IMR-90 (cell line): ENCODE measurements at regions of chr4 and their contacts with region 1.

Region 1: GRCh38 chr4:118224239-118224829 is 128.5 kb downstream of the PRSS12 start:
- DNase-seq: peak; percentile 80
- ATAC-seq: peak; percentile 70
- H3K4me3 ChIP-seq: no peak overlapping the region
- H3K27ac ChIP-seq: no peak overlapping the region
- H3K4me1 ChIP-seq: no peaks in the 10 kb centered on the region
- H3K27me3 ChIP-seq: no peaks in the 10 kb centered on the region
- CTCF ChIP-seq: peak; percentile 83
- POLR2A ChIP-seq: 0 out of 2 replicates have a peak, but pooled peaks have one; percentile 28
- RAD21 ChIP-seq: peak; percentile 96

Region 2: GRCh38 chr4:117560329-117560728 is 664.0 kb before region 1 on chr4:
- CTCF ChIA-PET with region 1: no interaction called
- POLR2A ChIA-PET with region 1: no interaction called
- dilution Hi-C with region 1: no loop called
- in situ Hi-C with region 1: loop called (anchors 25 kb)
- intact Hi-C with region 1: loop called (anchors 5 kb)
- DNase-seq: peak; percentile 40
- ATAC-seq: peak; percentile 35; the same call in 1 of the 2 replicates
- H3K4me3 ChIP-seq: no peak overlapping the region
- H3K27ac ChIP-seq: no peak overlapping the region
- H3K4me1 ChIP-seq: no peaks in the 10 kb centered on the region
- H3K27me3 ChIP-seq: no peaks in the 10 kb centered on the region
- CTCF ChIP-seq: peak; percentile 37
- POLR2A ChIP-seq: no peak
- RAD21 ChIP-seq: peak; percentile 41

Region 3: GRCh38 chr4:118034053-118034785 is 190.1 kb before region 1 on chr4 and contains the start of gene NDST3:
- CTCF ChIA-PET with region 1: interaction called, 4 read pairs
- POLR2A ChIA-PET with region 1: no interaction called
- dilution Hi-C with region 1: no loop called
- in situ Hi-C with region 1: no loop called
- intact Hi-C with region 1: loop called (anchors 1 kb)
- DNase-seq: peak; percentile 31
- ATAC-seq: peak; percentile 28
- H3K4me3 ChIP-seq: peak within 1 kb of the TSS; percentile 44
- H3K27ac ChIP-seq: no peak within 1 kb of the TSS
- H3K4me1 ChIP-seq: no peaks in the 10 kb centered on the region
- H3K27me3 ChIP-seq: 0 out of 2 replicates have a peak, but pooled peaks cover 2% of the 10 kb centered on the region
- CTCF ChIP-seq: peak; percentile 29; the same call in 1 of the 2 replicates
- POLR2A ChIP-seq: no peak
- RAD21 ChIP-seq: peak; percentile 50
- total RNA-seq, gene NDST3: under 0.01 and 0.18 TPM in 2 replicates

Region 4: GRCh38 chr4:118076958-118077766 is 147.2 kb before region 1 on chr4:
- CTCF ChIA-PET with region 1: interaction called, 5 read pairs
- POLR2A ChIA-PET with region 1: no interaction called
- dilution Hi-C with region 1: no loop called
- in situ Hi-C with region 1: loop called (anchors 5 kb)
- intact Hi-C with region 1: loop called (anchors 2 kb)
- DNase-seq: peak; percentile 34
- ATAC-seq: peak; percentile 56
- H3K4me3 ChIP-seq: no peak overlapping the region
- H3K27ac ChIP-seq: no peak overlapping the region
- H3K4me1 ChIP-seq: no peaks in the 10 kb centered on the region
- H3K27me3 ChIP-seq: no peaks in the 10 kb centered on the region
- CTCF ChIP-seq: peak; percentile 55
- POLR2A ChIP-seq: no peak
- RAD21 ChIP-seq: peak; percentile 63

Region 5: GRCh38 chr4:118173956-118174725 is 50.2 kb before region 1 on chr4:
- CTCF ChIA-PET with region 1: interaction called, 3 read pairs
- POLR2A ChIA-PET with region 1: no interaction called
- dilution Hi-C with region 1: no loop called
- in situ Hi-C with region 1: no loop called
- intact Hi-C with region 1: loop called (anchors 2 kb)
- DNase-seq: peak; percentile 96
- ATAC-seq: peak; percentile 96
- H3K4me3 ChIP-seq: no peak overlapping the region
- H3K27ac ChIP-seq: peak overlapping the region; percentile 78; the same call in 1 of the 2 replicates
- H3K4me1 ChIP-seq: peaks cover 13% of the 10 kb centered on the region
- H3K27me3 ChIP-seq: no peaks in the 10 kb centered on the region
- CTCF ChIP-seq: no peak
- POLR2A ChIP-seq: no peak
- RAD21 ChIP-seq: no peak

Region 6: DNA sequence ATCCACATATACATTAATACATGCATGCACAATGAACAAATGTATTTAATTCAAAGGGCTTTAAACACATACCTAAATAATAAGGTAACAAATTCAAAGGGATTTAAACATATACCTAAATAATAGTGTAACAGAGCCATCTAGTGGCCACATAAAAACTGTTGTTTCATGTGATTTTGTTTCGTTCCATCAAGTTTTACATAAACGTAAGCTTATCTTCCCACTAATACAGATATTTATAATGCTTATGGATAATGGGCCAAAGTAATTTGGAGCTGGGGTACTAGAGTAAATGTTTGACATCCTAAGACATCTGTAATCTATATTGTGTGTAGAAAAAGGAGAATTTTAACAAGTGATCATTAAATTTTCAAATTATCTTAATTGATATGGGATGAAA is 46.2 kb after region 1 on chr4:
- CTCF ChIA-PET with region 1: no interaction called
- POLR2A ChIA-PET with region 1: no interaction called
- dilution Hi-C with region 1: no loop called
- in situ Hi-C with region 1: no loop called
- intact Hi-C with region 1: loop called (anchors 1 kb)
- DNase-seq: peak; percentile 66
- ATAC-seq: peak; percentile 68; the same call in 1 of the 2 replicates
- H3K4me3 ChIP-seq: no peak overlapping the region
- H3K27ac ChIP-seq: no peak overlapping the region
- H3K4me1 ChIP-seq: no peaks in the 10 kb centered on the region
- H3K27me3 ChIP-seq: peaks cover 2% of the 10 kb centered on the region
- CTCF ChIP-seq: peak; percentile 68
- POLR2A ChIP-seq: no peak
- RAD21 ChIP-seq: peak; percentile 61